IMR-90 (cell line): ENCODE measurements at regions of chr15 and their contacts with region 1.

Region 1: DNA sequence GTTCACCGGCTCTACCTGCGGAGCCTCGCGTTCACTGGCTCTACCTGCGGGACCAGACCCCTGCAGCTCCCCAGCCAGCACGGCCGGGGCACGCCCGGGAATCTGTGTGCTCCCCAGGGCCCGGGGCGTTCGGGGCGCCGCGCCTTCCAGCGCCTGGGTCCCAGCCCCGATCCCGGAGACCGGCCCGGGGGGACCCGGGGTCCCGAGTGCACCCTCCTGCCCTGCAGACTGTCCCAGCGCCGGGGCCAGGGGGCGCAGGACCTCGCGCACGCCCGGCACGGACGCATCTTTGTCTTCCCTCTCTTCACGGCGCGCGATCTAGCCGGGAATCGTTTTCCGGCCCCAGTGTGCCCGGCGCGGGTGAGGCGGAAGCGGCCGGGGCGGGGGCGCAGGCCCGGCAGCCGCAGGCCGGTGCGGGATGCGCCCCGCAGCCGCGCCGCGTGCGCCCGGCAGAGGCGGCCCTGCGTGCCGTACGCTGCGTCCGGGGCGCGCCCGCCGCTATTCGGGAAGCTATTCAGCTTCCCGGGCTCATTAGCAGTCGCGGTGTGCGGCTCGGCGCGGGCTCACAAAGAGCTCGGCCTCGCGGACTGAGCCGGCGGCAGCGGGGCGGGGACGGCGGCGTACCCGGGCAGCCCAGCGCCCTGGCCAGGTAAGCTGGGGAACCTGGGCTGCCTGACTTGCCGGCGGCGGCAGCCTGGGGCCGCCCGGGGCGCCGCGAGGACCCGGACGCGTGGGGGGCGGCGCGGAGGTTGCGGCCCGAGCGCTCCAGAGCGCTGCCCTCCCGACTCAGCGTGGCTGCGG is at the start of gene APBA2:
- DNase-seq: peak; percentile 41
- ATAC-seq: peak; percentile 63
- H3K4me3 ChIP-seq: peak within 1 kb of the TSS; percentile 86
- H3K27ac ChIP-seq: peak within 1 kb of the TSS; percentile 59; the same call in 1 of the 2 replicates
- H3K4me1 ChIP-seq: peaks cover 8% of the 10 kb centered on the region; the same call in 1 of the 2 replicates
- H3K27me3 ChIP-seq: no peaks in the 10 kb centered on the region
- CTCF ChIP-seq: 0 out of 2 replicates have a peak, but pooled peaks have one; percentile 15
- POLR2A ChIP-seq: no peak
- RAD21 ChIP-seq: no peak
- total RNA-seq, gene APBA2: 27.8 and 33.0 TPM in 2 replicates

Region 2: DNA sequence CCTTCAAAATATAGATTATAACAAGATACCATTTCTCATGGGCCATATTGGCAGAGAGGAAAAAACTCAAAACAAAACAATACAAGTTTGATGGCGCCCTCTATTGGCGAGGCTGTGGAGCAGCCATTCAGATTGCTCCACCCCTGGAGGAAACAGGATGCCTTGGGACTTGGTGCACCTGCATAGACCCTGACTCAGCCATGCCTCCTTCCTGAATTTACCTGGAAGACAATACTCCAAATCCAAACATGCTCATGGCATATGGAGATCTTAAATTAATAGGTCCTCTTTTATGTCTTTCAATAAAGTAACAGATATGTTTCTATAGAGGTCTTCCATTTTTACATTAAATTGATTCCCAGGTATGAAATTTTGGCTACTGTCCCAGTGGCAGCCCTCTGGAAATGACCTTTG is 89.9 kb after region 1 on chr15:
- CTCF ChIA-PET with region 1: interaction called, 3 read pairs
- POLR2A ChIA-PET with region 1: no interaction called
- dilution Hi-C with region 1: no loop called
- in situ Hi-C with region 1: loop called (anchors 10 kb)
- intact Hi-C with region 1: loop called (anchors 2 kb)
- DNase-seq: peak; percentile 55
- ATAC-seq: no peak
- H3K4me3 ChIP-seq: no peak overlapping the region
- H3K27ac ChIP-seq: no peak overlapping the region
- H3K4me1 ChIP-seq: peaks cover 4% of the 10 kb centered on the region; the same call in 1 of the 2 replicates
- H3K27me3 ChIP-seq: no peaks in the 10 kb centered on the region
- CTCF ChIP-seq: peak; percentile 72
- POLR2A ChIP-seq: no peak
- RAD21 ChIP-seq: peak; percentile 72

Region 3: GRCh38 chr15:29103824-29104565 is 218.2 kb after region 1 on chr15:
- CTCF ChIA-PET with region 1: interaction called, 5 read pairs
- POLR2A ChIA-PET with region 1: no interaction called
- dilution Hi-C with region 1: no loop called
- in situ Hi-C with region 1: loop called (anchors 5 kb)
- intact Hi-C with region 1: loop called (anchors 1 kb)
- DNase-seq: peak; percentile 68
- ATAC-seq: peak; percentile 94
- H3K4me3 ChIP-seq: no peak overlapping the region
- H3K27ac ChIP-seq: no peak overlapping the region
- H3K4me1 ChIP-seq: no peaks in the 10 kb centered on the region
- H3K27me3 ChIP-seq: no peaks in the 10 kb centered on the region
- CTCF ChIP-seq: peak; percentile 93
- POLR2A ChIP-seq: no peak
- RAD21 ChIP-seq: peak; percentile 78